ENCODE measurements at regions of chr10 and their contacts with region 1.

Region 1: GRCh38 chr10:116742367-116743265 is at the start of gene HSPA12A:
- DNase-seq: peak; percentile 89
- ATAC-seq: peak; percentile 89
- H3K4me3 ChIP-seq: peak within 1 kb of the TSS; percentile 100
- H3K27ac ChIP-seq: peak within 1 kb of the TSS; percentile 71
- H3K4me1 ChIP-seq: peaks cover 9% of the 10 kb centered on the region
- H3K27me3 ChIP-seq: no peaks in the 10 kb centered on the region
- CTCF ChIP-seq: no peak
- POLR2A ChIP-seq: peak; percentile 94
- RAD21 ChIP-seq: no peak
- total RNA-seq, gene HSPA12A: 16.1 and 18.6 TPM in 2 replicates

Region 2: DNA sequence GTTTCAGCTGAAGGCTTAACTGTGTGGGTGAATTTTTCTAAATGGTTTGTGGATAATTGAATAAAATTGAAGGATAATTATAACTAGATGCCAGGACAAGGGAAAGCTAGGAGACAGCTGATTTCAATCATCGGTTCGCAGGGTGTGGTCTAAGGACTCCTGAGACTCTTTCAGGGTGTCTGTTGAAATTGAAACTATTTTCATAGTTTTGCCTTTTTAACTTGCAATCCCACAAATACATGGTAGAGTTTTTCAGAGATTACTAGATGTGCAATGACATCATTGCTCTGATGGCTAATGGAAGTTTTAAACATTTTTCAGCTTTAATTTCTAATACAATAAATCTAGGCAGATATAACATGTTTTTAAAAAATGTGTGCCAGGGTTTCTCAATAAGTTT is 1786.2 kb before region 1 on chr10:
- CTCF ChIA-PET with region 1: no interaction called
- POLR2A ChIA-PET with region 1: no interaction called
- dilution Hi-C with region 1: no loop called
- in situ Hi-C with region 1: no loop called
- intact Hi-C with region 1: loop called (anchors 5 kb)
- DNase-seq: no peak
- ATAC-seq: no peak
- H3K4me3 ChIP-seq: no peak overlapping the region
- H3K27ac ChIP-seq: no peak overlapping the region
- H3K4me1 ChIP-seq: peaks cover 4% of the 10 kb centered on the region
- H3K27me3 ChIP-seq: no peaks in the 10 kb centered on the region
- CTCF ChIP-seq: no peak
- POLR2A ChIP-seq: no peak
- RAD21 ChIP-seq: no peak